T-cell (primary cell): ENCODE measurements at regions of chr18 and their contacts with region 1.

Region 1: GRCh38 chr18:623761-624620 is 27.2 kb downstream of the CLUL1 start:
- DNase-seq: peak in 31 of 35 experiments; percentile 9 to 71 (median 42)
- ATAC-seq: peak in 3 of 4 experiments; percentile 43 to 66 (median 52)
- H3K4me3 ChIP-seq: no peak overlapping the region
- H3K4me3 Mint-ChIP-seq: no peak overlapping the region
- H3K27ac ChIP-seq: no peak overlapping the region
- H3K27ac Mint-ChIP-seq: no peak overlapping the region
- H3K4me1 ChIP-seq: no peaks in the 10 kb centered on the region
- H3K4me1 Mint-ChIP-seq: peaks cover 0 to 2% (median 0%) of the 10 kb centered on the region in 3 donors
- H3K27me3 ChIP-seq: peaks cover 0 to 15% of the 10 kb centered on the region in 2 experiments
- H3K27me3 Mint-ChIP-seq: peaks cover 6 to 10% of the 10 kb centered on the region in 2 donors

Region 2: GRCh38 chr18:556058-556457 is 67.9 kb before region 1 on chr18:
- CTCF ChIA-PET with region 1: no interaction called
- POLR2A ChIA-PET with region 1: no interaction called
- DNase-seq: no peak
- ATAC-seq: no peak
- H3K4me3 ChIP-seq: no peak overlapping the region
- H3K4me3 Mint-ChIP-seq: no peak overlapping the region
- H3K27ac ChIP-seq: no peak overlapping the region
- H3K27ac Mint-ChIP-seq: no peak overlapping the region
- H3K4me1 ChIP-seq: no peaks in the 10 kb centered on the region
- H3K4me1 Mint-ChIP-seq: no peaks in the 10 kb centered on the region
- H3K27me3 ChIP-seq: no peaks in the 10 kb centered on the region
- H3K27me3 Mint-ChIP-seq: peaks cover 0 to 7% of the 10 kb centered on the region in 2 donors

Region 3: DNA sequence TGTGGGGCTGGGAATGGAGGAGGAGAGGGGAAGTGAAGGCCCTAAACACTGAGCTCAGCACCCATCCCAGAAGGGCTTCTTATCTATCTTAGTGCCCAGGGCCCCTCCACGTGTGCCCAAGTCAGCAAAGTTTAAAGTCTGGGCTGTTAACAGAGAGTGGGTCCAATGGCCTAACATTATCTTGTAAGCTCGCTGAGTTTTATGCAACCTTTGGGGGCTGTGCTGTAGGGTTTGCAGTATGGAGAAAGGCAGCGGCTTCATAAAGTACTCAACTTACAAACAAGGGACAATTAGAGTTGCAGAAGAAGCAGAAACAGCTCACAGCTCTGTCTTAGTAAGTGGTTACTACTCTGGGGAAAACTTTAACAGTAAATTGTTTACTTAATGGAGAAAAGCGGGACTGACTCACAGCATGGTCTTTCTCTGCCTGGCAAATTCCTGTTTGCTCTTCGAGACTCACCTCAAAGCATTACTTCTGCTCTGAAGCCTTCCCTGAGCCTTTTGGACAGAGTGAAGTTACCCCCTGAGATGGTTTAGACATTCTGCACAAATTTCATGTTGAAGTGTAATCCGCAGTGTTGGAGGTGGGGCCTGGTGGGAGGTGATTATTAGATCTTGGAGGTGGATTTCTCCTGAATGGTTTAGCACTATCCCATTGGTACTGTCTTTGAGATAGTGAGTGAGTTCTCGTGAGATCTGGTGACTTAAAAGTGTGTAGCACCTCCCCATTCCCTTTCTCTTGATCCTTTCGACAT is 79.4 kb after region 1 on chr18:
- CTCF ChIA-PET with region 1: interaction called, 3 to 12 read pairs
- POLR2A ChIA-PET with region 1: no interaction called
- DNase-seq: no peak
- ATAC-seq: no peak
- H3K4me3 ChIP-seq: no peak overlapping the region
- H3K4me3 Mint-ChIP-seq: no peak overlapping the region
- H3K27ac ChIP-seq: no peak overlapping the region
- H3K27ac Mint-ChIP-seq: no peak overlapping the region
- H3K4me1 ChIP-seq: no peaks in the 10 kb centered on the region
- H3K4me1 Mint-ChIP-seq: peaks cover 7 to 33% (median 19%) of the 10 kb centered on the region in 3 donors
- H3K27me3 ChIP-seq: no peaks in the 10 kb centered on the region
- H3K27me3 Mint-ChIP-seq: no peaks in the 10 kb centered on the region

Region 4: GRCh38 chr18:839224-840022 is 215.4 kb after region 1 on chr18:
- CTCF ChIA-PET with region 1: interaction called, 15 to 27 read pairs
- POLR2A ChIA-PET with region 1: no interaction called
- DNase-seq: peak; percentile 49 to 91 (median 82)
- ATAC-seq: peak; percentile 91 to 99 (median 95)
- H3K4me3 ChIP-seq: no peak overlapping the region
- H3K4me3 Mint-ChIP-seq: no peak overlapping the region
- H3K27ac ChIP-seq: no peak overlapping the region
- H3K27ac Mint-ChIP-seq: no peak overlapping the region
- H3K4me1 ChIP-seq: peaks cover 0 to 3% of the 10 kb centered on the region in 2 experiments
- H3K4me1 Mint-ChIP-seq: peaks cover 7 to 8% (median 7%) of the 10 kb centered on the region in 3 donors
- H3K27me3 ChIP-seq: no peaks in the 10 kb centered on the region
- H3K27me3 Mint-ChIP-seq: peaks cover 0 to 1% of the 10 kb centered on the region in 2 donors

Region 5: DNA sequence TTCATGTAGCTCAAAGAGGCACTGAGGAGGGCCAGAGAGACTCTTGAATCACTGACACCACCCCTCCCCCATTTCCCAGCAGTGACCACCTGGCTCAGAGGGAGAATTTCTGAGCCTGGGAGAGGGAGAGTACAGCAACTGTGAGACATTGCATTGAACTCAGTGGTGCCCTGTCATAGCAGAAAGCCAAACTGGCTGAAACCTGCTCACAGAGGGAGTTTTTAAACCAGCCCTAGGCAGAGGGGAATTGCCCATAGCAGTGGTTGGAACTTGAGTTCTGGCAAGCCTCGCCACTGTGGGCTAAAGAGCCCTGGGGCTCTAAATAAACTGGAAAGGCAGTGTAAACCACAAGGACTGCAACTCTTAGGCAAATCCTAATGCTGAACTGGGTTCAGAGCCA is 523.7 kb after region 1 on chr18:
- CTCF ChIA-PET with region 1: no interaction called
- POLR2A ChIA-PET with region 1: no interaction called
- DNase-seq: no peak
- ATAC-seq: no peak
- H3K4me3 ChIP-seq: no peak overlapping the region
- H3K4me3 Mint-ChIP-seq: no peak overlapping the region
- H3K27ac ChIP-seq: no peak overlapping the region
- H3K27ac Mint-ChIP-seq: no peak overlapping the region
- H3K4me1 ChIP-seq: no peaks in the 10 kb centered on the region
- H3K4me1 Mint-ChIP-seq: no peaks in the 10 kb centered on the region
- H3K27me3 ChIP-seq: no peaks in the 10 kb centered on the region
- H3K27me3 Mint-ChIP-seq: no peaks in the 10 kb centered on the region